MCF 10A (cell line): ENCODE measurements at regions of chr11 and their contacts with region 1.

Region 1: DNA sequence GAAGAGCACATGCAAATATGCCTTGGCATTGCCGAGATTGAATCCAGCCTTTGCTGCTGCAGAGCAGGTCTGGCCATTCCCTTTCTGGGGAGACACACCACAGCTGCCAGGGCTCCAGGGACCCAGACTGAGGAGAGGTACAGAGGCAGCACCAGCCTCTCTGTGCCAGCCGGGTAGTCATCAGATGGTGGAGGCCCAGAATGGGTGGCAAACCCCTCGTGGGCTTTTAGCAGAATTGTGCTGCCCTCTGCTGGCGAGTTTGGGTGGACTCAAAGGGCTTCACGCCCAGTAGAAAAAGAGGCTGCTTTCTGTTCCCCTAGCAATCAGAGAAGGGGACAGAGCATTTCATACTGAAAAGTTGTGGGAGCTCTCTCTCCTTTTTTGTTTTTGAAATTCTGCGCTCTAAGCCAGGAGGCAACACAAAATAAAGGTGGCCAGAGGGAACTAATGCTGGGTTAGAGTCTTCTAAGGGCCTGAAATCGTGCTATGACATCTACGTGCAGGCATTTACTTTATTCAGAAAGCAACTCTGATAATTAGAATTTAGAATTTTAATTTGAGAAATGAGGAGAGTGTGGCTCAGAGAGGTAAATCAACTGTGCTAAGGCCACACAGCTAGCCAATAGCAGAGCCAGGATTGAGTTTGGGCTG is 158.8 kb upstream of the NAV2 start:
- DNase-seq: peak; percentile 85
- H3K4me3 Mint-ChIP-seq: no peak overlapping the region
- H3K27ac Mint-ChIP-seq: no peak overlapping the region
- H3K4me1 Mint-ChIP-seq: no peaks in the 10 kb centered on the region
- H3K27me3 Mint-ChIP-seq: peaks cover 52% of the 10 kb centered on the region
- CTCF ChIP-seq: peak; percentile 88

Region 2: DNA sequence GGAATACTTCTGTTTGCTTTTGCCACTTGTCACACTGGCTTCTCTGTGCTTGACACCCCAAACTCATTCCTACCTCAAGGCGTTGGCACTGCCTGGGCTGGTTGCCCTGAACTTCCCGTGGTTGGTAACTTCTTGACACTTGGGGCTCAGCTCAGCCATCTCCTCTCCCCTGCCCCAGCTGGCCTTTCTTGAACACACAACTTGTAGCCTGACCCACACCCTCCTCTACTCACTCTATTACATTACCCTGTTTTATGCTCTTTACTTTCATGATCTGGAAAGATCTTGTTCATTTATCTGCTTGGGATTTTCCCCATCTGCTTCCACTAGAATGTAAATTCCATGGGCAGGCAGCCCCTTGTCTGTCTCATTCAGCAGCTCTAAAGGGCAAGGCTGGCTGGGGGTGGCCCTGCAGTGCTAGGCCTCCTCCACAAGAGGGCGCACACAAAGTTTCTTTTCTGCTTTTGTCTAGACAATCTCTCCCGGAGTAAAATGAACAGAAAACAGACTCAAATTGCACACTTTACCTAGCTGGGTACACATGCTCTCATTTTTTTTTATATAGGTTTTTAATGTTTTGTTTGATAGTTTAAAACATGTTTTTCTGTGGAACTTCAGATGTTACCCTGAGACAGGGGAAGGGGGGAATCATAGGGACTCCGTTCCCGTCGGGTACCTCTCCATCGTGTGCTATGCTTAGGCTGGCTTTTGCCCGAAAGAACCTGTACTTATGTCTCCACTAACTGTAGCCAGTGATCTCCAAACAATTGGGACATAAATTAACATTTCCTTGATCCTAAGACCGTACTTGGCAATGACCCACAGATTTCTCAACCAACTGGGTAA is 476.8 kb before region 1 on chr11:
- CTCF ChIA-PET with region 1: interaction called, 464 read pairs
- POLR2A ChIA-PET with region 1: interaction called, 3 read pairs
- intact Hi-C with region 1: no loop called
- DNase-seq: peak; percentile 69
- H3K4me3 Mint-ChIP-seq: no peak overlapping the region
- H3K27ac Mint-ChIP-seq: no peak overlapping the region
- H3K4me1 Mint-ChIP-seq: peaks cover 21% of the 10 kb centered on the region
- H3K27me3 Mint-ChIP-seq: peaks cover 21% of the 10 kb centered on the region
- CTCF ChIP-seq: peak; percentile 94

Region 3: DNA sequence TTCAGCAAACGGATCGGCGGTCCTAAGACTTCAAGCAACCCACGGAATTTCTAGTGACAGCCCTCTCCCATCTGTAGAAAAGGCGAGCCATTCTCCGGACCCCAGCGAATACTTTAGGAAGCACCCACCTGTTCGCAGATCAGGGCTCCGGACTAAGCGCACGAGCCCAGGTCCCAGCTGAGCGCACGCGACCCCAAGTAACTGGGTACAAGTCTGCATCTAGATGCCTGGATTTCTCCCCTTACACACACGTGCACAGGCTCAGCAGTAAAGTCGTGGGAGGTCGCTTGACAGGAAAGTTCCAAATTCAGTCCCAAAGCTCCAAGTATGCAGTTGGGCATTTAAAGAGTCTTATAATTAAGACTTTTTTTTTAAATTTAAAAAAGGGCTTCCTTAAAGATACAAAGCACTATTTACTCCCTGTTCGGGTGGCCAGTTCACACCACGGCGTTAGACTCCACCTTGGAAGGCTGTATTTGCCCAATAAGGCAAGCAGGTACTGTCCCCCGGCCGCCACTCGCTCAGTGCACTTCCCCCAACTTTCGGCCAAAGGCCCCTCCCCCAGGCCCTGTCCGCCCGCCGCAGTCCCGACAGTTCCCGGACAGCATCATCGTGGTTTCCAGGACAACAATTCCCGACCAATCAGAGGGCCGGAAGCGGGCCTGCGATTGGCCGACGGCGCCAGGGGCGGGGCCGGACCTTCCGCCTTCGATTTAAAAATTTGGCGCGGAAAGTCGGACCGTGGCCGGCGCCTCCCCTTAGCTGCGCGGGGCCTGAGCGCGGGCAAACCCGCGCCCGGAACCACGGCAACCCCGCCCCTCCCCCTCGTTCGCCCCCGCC is 313.2 kb before region 1 on chr11 and contains the start of gene E2F8:
- CTCF ChIA-PET with region 1: interaction called, 14 read pairs
- POLR2A ChIA-PET with region 1: no interaction called
- intact Hi-C with region 1: no loop called
- DNase-seq: peak; percentile 95
- H3K4me3 Mint-ChIP-seq: peak within 1 kb of the TSS; percentile 85
- H3K27ac Mint-ChIP-seq: peak within 1 kb of the TSS; percentile 42
- H3K4me1 Mint-ChIP-seq: peaks cover 18% of the 10 kb centered on the region
- H3K27me3 Mint-ChIP-seq: no peaks in the 10 kb centered on the region
- CTCF ChIP-seq: no peak
- total RNA-seq, gene E2F8: 0.88 and 1.2 TPM in 2 replicates

Region 4: DNA sequence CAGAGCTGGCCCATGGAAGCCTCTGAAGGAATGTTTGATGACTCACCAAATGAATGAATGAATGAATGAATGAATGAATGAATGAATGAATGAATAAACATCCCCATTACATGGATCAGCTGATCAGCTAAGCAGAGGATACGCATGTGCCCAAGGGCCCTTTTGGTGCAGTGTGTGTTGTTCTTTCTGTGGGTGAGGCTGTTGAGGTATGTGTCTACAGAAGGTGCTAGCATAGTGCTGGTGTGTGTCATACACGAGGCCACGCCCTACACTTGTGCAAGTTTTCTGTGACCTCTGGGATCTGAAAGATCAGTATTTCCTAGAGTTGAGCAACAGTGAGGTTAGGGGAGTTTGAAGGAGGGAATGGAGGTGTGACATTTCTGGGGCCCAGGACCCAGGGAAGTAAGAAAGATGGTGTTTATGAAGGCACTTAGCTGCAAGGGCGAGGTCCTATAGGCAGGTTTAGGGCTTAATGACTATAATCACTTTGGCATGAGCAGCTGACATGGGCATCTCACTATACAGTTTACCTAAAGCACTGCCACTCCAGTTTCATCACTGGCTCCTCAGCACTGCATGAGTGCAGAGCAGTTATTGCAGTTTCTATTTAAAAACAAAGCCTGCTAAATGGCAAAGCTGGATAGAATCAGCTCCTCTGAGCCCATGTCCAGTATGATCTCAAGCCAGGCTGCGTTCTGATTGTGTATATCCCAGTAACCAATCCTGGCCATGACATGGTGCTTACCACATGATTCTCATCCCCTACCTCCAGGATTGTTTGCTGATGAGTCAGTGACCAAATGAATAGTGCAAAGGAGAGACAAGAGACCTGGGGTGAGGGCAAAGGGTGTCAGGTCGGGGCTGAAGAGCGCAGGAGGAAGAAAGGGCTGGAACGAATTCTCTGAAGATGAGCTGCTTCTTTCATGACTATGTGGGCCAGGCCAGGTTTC is 276.7 kb before region 1 on chr11:
- CTCF ChIA-PET with region 1: interaction called, 16 read pairs
- POLR2A ChIA-PET with region 1: no interaction called
- intact Hi-C with region 1: no loop called
- DNase-seq: peak; percentile 95
- H3K4me3 Mint-ChIP-seq: no peak overlapping the region
- H3K27ac Mint-ChIP-seq: peak overlapping the region; percentile 74
- H3K4me1 Mint-ChIP-seq: peaks cover 27% of the 10 kb centered on the region
- H3K27me3 Mint-ChIP-seq: no peaks in the 10 kb centered on the region
- CTCF ChIP-seq: no peak

Region 5: DNA sequence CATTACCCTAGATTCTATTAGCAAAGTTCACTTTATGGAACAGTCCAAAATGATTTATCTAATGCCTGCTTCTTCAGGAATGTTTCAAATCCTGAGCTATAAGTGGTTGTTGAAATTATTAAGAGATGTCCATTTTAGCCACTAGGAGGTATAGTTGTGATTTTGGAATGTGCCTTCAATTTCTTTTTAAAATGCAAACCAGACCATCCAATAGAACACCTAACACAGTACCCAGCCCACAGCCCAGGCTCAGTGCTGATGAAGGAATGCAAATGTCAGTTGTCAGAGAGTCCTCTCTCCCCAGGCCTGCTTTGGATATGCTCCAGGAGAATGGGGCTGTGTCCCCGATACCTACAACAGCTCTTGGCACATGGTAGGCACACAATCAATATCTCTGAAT is 227.3 kb before region 1 on chr11:
- CTCF ChIA-PET with region 1: interaction called, 28 read pairs
- POLR2A ChIA-PET with region 1: no interaction called
- intact Hi-C with region 1: loop called (anchors 1 kb)
- DNase-seq: peak; percentile 41
- H3K4me3 Mint-ChIP-seq: no peak overlapping the region
- H3K27ac Mint-ChIP-seq: no peak overlapping the region
- H3K4me1 Mint-ChIP-seq: no peaks in the 10 kb centered on the region
- H3K27me3 Mint-ChIP-seq: peaks cover 80% of the 10 kb centered on the region
- CTCF ChIP-seq: peak; percentile 29

Region 6: DNA sequence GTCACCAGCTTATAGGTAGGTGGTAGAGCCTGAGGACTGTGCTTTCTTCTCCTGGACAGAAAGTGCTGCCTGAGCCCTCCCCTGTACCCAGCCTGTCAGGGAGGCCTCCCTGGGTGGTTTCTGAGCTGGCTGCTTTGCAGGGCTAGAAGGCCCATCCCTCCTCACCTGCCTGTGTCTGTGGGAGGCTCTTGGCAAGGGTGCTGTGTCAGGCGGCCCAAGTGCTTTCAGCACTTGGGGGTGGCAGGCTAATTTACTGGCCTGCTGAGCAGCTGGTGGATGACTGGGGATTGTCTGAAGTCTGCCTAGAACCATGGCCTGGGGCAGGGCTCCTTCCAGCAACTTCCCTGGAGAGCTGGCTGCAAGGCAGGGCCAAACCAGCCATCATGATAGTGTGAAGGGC is 19.9 kb after region 1 on chr11:
- CTCF ChIA-PET with region 1: interaction called, 10 read pairs
- POLR2A ChIA-PET with region 1: no interaction called
- intact Hi-C with region 1: no loop called
- DNase-seq: no peak
- H3K4me3 Mint-ChIP-seq: no peak overlapping the region
- H3K27ac Mint-ChIP-seq: no peak overlapping the region
- H3K4me1 Mint-ChIP-seq: no peaks in the 10 kb centered on the region
- H3K27me3 Mint-ChIP-seq: no peaks in the 10 kb centered on the region
- CTCF ChIP-seq: no peak